PC-3 (cell line): ENCODE measurements at regions of chr3 and their contacts with region 1.

Region 1: DNA sequence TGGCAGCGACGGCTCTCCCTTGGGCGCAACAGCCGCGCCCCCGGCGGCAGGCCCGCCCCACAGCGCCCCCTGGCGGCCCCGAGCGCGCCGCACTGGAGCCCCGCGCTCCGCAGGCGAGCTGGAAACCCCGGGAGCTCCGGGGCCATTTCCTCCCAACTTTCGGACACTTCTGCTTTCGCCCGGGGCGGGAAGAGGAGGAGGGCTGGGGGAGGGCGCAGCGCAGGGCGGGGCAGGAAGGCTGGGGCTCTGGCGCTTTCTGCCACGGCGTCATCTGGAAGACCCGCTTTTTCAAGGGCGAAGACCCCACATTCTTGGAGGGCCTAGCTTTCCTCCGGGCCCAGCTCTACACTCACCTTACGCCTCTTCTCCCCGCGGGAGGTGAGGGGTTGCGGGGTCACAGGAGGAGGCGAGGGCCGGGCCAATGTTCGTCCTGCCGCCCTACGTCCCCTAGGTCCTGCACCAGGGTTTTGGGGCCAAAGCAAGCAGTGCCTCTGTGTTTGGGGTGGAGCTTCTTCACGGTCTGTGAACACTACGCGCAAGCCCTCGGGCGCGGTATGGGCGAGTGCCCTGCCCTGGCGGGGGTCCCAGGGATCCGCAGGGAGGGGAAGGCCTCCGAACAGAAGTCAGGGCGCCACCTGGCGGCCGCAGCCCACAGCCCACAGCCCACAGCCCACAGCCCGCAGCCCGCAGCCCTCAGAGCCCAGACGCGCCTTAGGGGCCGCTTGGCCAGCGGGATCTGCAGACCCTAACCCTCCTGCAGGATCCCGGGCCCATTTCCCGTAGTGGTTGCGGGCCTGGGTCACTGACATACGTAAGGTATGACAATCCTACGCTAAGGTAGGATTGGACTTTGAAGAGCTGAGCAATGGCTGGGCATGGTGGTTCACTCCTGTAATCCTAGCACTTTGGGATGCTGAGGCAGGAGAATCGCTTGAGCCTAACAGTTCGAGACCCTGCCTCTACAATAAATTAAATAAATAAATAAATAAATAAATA is 31.1 kb downstream of the FOXL2 start:
- DNase-seq: peak; percentile 87
- ATAC-seq: peak; percentile 73
- H3K4me3 ChIP-seq: peak overlapping the region; percentile 94
- H3K27ac ChIP-seq: peak overlapping the region; percentile 96
- H3K4me1 ChIP-seq: peaks cover 28% of the 10 kb centered on the region
- H3K27me3 ChIP-seq: no peaks in the 10 kb centered on the region
- CTCF ChIP-seq: peak; percentile 68

Region 2: GRCh38 chr3:138625707-138626365 is 290.0 kb before region 1 on chr3:
- CTCF ChIA-PET with region 1: no interaction called
- POLR2A ChIA-PET with region 1: no interaction called
- intact Hi-C with region 1: no loop called
- DNase-seq: peak; percentile 68
- ATAC-seq: peak; percentile 87
- H3K4me3 ChIP-seq: no peak overlapping the region
- H3K27ac ChIP-seq: no peak overlapping the region
- H3K4me1 ChIP-seq: peaks cover 15% of the 10 kb centered on the region
- H3K27me3 ChIP-seq: no peaks in the 10 kb centered on the region
- CTCF ChIP-seq: no peak

Region 3: GRCh38 chr3:138694287-138695007 is 221.4 kb before region 1 on chr3:
- CTCF ChIA-PET with region 1: interaction called, 16 read pairs
- POLR2A ChIA-PET with region 1: no interaction called
- intact Hi-C with region 1: loop called (anchors 1 kb)
- DNase-seq: peak; percentile 76
- ATAC-seq: peak; percentile 92
- H3K4me3 ChIP-seq: no peak overlapping the region
- H3K27ac ChIP-seq: peak overlapping the region; percentile 62
- H3K4me1 ChIP-seq: peaks cover 15% of the 10 kb centered on the region
- H3K27me3 ChIP-seq: no peaks in the 10 kb centered on the region
- CTCF ChIP-seq: no peak

Region 4: GRCh38 chr3:138717348-138717747 is 198.5 kb before region 1 on chr3:
- CTCF ChIA-PET with region 1: interaction called, 18 read pairs
- POLR2A ChIA-PET with region 1: no interaction called
- intact Hi-C with region 1: no loop called
- DNase-seq: no peak
- ATAC-seq: no peak
- H3K4me3 ChIP-seq: no peak overlapping the region
- H3K27ac ChIP-seq: no peak overlapping the region
- H3K4me1 ChIP-seq: no peaks in the 10 kb centered on the region
- H3K27me3 ChIP-seq: no peaks in the 10 kb centered on the region
- CTCF ChIP-seq: no peak

Region 5: DNA sequence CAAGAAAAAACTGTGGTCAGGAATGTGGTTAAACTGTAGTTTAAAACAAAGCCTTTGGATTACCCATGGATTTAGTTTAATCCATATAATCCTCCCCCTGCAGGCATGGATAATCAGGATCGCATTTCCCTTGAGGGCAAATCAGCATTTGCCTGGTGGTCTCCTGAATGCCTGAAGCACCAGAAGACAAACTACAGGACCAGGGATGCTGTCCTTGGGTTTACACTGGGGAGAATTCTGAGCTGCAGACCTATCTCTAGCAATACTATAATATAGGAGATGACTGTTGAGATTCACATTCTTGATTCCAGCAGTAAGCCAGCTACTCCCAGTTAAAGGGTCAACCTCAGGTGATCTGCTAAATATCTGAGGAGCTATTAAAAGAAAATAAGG is 91.7 kb before region 1 on chr3:
- CTCF ChIA-PET with region 1: interaction called, 14 read pairs
- POLR2A ChIA-PET with region 1: no interaction called
- intact Hi-C with region 1: no loop called
- DNase-seq: peak; percentile 7
- ATAC-seq: peak; percentile 37; the same call in 1 of the 2 replicates
- H3K4me3 ChIP-seq: no peak overlapping the region
- H3K27ac ChIP-seq: no peak overlapping the region
- H3K4me1 ChIP-seq: peaks cover 13% of the 10 kb centered on the region
- H3K27me3 ChIP-seq: no peaks in the 10 kb centered on the region
- CTCF ChIP-seq: no peak

Region 6: GRCh38 chr3:138862924-138863775 is 52.7 kb before region 1 on chr3:
- CTCF ChIA-PET with region 1: interaction called, 6 read pairs
- POLR2A ChIA-PET with region 1: interaction called, 5 read pairs
- intact Hi-C with region 1: loop called (anchors 1 kb)
- DNase-seq: peak; percentile 88
- ATAC-seq: peak; percentile 97
- H3K4me3 ChIP-seq: peak overlapping the region; percentile 40; the same call in 1 of the 2 replicates
- H3K27ac ChIP-seq: peak overlapping the region; percentile 98
- H3K4me1 ChIP-seq: peaks cover 23% of the 10 kb centered on the region
- H3K27me3 ChIP-seq: no peaks in the 10 kb centered on the region
- CTCF ChIP-seq: no peak

Region 7: DNA sequence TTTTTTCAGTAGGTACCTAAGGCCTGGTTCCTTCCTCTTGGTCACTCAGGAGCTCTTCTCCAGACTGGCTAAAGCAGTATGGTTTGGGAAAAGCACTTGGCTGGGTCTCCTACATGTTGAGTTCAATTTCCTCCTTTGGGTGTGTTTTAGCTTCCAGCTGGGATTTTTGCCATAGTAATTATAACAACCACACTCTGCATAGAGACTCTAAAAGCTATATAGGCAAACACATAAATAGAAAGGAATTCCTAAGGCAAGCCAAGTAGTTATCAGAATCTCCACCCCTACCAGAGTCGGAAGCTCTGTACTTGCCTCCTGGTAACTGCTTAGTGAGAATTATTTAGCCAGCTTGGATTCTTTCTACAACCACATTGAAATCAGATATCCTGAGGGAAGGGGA is 17.5 kb before region 1 on chr3:
- CTCF ChIA-PET with region 1: interaction called, 11 read pairs
- POLR2A ChIA-PET with region 1: no interaction called
- intact Hi-C with region 1: loop called (anchors 1 kb)
- DNase-seq: no peak
- ATAC-seq: peak; percentile 91
- H3K4me3 ChIP-seq: no peak overlapping the region
- H3K27ac ChIP-seq: no peak overlapping the region
- H3K4me1 ChIP-seq: no peaks in the 10 kb centered on the region
- H3K27me3 ChIP-seq: no peaks in the 10 kb centered on the region
- CTCF ChIP-seq: no peak

Region 8: DNA sequence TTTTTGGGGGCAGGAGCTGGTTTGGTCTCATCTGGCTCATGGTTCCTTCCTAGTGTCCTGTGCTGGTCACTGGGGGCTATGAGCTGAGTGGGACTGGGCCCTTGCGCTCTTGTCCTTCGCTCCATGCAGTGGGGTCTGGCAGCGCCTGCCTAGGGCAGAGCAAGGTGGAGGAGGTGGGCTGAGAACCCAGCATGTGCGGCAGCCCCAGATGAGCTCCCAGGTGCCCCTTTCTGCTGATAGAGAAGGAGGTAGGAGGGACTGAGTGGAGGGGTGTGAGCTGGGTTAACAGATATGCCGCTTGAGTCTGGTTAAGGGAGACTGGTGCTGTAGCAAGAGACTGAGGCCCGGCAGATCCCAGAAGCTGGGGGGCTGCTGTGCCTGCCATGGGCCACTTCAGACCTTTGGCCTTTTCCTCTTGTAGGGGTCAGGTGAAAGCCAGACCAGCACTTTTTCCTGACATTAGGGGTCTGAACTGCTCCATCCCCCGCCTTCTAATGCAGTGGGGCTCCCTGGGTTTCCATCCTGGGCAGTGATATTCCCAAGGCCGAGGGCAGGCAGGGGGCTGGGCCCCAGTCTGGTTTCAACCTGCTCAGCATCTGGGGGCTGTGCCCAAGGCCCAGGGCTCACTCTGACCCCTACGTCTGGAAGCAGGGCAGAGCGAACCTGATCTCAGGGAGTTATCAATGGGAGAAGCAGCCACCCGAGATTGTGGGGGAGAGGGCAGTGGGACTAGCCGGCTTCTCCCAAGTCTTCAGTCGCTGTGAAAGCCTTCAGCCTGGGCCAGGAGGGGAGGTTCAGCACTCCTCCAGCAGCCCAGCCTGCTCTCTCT is 191.8 kb after region 1 on chr3:
- CTCF ChIA-PET with region 1: no interaction called
- POLR2A ChIA-PET with region 1: no interaction called
- intact Hi-C with region 1: no loop called
- DNase-seq: no peak
- ATAC-seq: no peak
- H3K4me3 ChIP-seq: no peak overlapping the region
- H3K27ac ChIP-seq: no peak overlapping the region
- H3K4me1 ChIP-seq: no peaks in the 10 kb centered on the region
- H3K27me3 ChIP-seq: no peaks in the 10 kb centered on the region
- CTCF ChIP-seq: no peak